B cell (primary cell): ENCODE measurements at regions of chrX and their contacts with region 1.

Region 1: GRCh38 chrX:19904778-19905367 is 17.5 kb upstream of the SH3KBP1 start:
- DNase-seq: peak; percentile 62
- ATAC-seq: peak; percentile 57
- H3K4me3 ChIP-seq: no peak overlapping the region
- H3K4me3 Mint-ChIP-seq: no peak overlapping the region
- H3K27ac ChIP-seq: no peak overlapping the region
- H3K27ac Mint-ChIP-seq: no peak overlapping the region
- H3K4me1 ChIP-seq: peaks cover 0 to 5% of the 10 kb centered on the region in 2 donors
- H3K4me1 Mint-ChIP-seq: peaks cover 11% of the 10 kb centered on the region
- H3K27me3 ChIP-seq: no peaks in the 10 kb centered on the region
- H3K27me3 Mint-ChIP-seq: no peaks in the 10 kb centered on the region
- CTCF ChIP-seq: peak; percentile 76

Region 2: GRCh38 chrX:20060961-20061748 is 156.3 kb after region 1 on chrX:
- CTCF ChIA-PET with region 1: interaction called, 28 read pairs
- POLR2A ChIA-PET with region 1: no interaction called
- intact Hi-C with region 1: no loop called
- DNase-seq: peak; percentile 89
- ATAC-seq: peak; percentile 97
- H3K4me3 ChIP-seq: no peak overlapping the region
- H3K4me3 Mint-ChIP-seq: peak overlapping the region; percentile 56
- H3K27ac ChIP-seq: peak overlapping the region; percentile 64 to 71
- H3K27ac Mint-ChIP-seq: peak overlapping the region; percentile 86
- H3K4me1 ChIP-seq: peaks cover 21 to 27% of the 10 kb centered on the region in 2 donors
- H3K4me1 Mint-ChIP-seq: peaks cover 30% of the 10 kb centered on the region
- H3K27me3 ChIP-seq: no peaks in the 10 kb centered on the region
- H3K27me3 Mint-ChIP-seq: no peaks in the 10 kb centered on the region
- CTCF ChIP-seq: no peak

Region 3: GRCh38 chrX:20124964-20125363 is 220.1 kb after region 1 on chrX:
- CTCF ChIA-PET with region 1: no interaction called
- POLR2A ChIA-PET with region 1: no interaction called
- intact Hi-C with region 1: loop called (anchors 2 kb)
- DNase-seq: no peak
- ATAC-seq: no peak
- H3K4me3 ChIP-seq: no peak overlapping the region
- H3K4me3 Mint-ChIP-seq: no peak overlapping the region
- H3K27ac ChIP-seq: no peak overlapping the region
- H3K27ac Mint-ChIP-seq: no peak overlapping the region
- H3K4me1 ChIP-seq: no peaks in the 10 kb centered on the region
- H3K4me1 Mint-ChIP-seq: no peaks in the 10 kb centered on the region
- H3K27me3 ChIP-seq: no peaks in the 10 kb centered on the region
- H3K27me3 Mint-ChIP-seq: no peaks in the 10 kb centered on the region
- CTCF ChIP-seq: no peak